ENCODE measurements at regions of chr7 and their contacts with region 1.

Region 1: GRCh38 chr7:43612599-43613589 is 30.0 kb downstream of the STK17A start:
- DNase-seq: no peak
- H3K4me3 Mint-ChIP-seq: no peak overlapping the region
- H3K27ac Mint-ChIP-seq: peak overlapping the region; percentile 55
- H3K4me1 Mint-ChIP-seq: peaks cover 58% of the 10 kb centered on the region
- H3K27me3 Mint-ChIP-seq: no peaks in the 10 kb centered on the region

Region 2: GRCh38 chr7:43594020-43594419 is 18.9 kb before region 1 on chr7:
- CTCF ChIA-PET with region 1: no interaction called
- POLR2A ChIA-PET with region 1: interaction called, 10 read pairs
- DNase-seq: no peak
- H3K4me3 Mint-ChIP-seq: peak overlapping the region; percentile 18
- H3K27ac Mint-ChIP-seq: peak overlapping the region; percentile 68
- H3K4me1 Mint-ChIP-seq: peaks cover 70% of the 10 kb centered on the region
- H3K27me3 Mint-ChIP-seq: no peaks in the 10 kb centered on the region

Region 3: DNA sequence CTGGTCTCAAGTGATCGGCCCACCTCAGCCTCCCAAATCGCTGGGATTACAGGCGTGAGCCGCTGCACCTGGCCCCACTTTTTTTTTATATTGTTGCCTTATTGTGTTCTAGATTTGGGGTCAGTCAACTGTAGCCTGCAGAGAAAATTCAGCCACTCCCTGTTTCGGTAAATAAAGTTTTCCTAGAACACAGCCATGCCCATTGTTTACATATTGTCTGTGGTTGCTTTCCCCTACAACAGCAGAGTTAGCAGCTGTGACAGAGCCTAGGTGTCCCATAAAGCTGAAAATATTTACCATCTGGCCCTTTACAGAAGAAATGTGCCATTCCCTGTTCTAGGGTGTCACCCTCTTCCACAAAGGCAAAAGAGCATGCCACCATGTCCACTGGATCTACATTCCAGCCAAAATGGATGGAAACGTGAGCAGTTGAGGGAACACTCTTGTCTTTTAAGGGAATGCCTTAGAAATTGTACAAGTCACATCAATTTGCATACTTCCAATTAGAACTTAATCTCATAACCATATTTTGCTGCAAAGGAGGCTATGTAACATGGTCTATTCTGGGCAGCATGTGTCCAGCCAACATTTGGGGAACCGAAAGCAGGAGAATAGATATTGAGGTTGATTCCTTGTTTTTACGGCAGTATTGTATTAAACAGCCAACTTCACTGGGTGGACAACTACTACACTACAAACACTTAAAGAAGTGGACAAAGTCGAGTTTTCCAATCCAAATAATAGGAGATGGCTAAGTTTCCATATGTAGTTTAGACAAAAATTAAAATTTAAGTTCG is 134.6 kb after region 1 on chr7:
- CTCF ChIA-PET with region 1: no interaction called
- POLR2A ChIA-PET with region 1: no interaction called
- DNase-seq: no peak
- H3K4me3 Mint-ChIP-seq: no peak overlapping the region
- H3K27ac Mint-ChIP-seq: no peak overlapping the region
- H3K4me1 Mint-ChIP-seq: peaks cover 9% of the 10 kb centered on the region
- H3K27me3 Mint-ChIP-seq: peaks cover 3% of the 10 kb centered on the region

Measured in activated CD4-positive, alpha-beta T cell treated with anti-CD3 and anti-CD28 coated beads, Interleukin-2, amount 10 ng/mL, durations not matched to agents 7 days and 5 days (primary cell).